ENCODE measurements at regions of chr7 and their contacts with region 1.

Region 1: DNA sequence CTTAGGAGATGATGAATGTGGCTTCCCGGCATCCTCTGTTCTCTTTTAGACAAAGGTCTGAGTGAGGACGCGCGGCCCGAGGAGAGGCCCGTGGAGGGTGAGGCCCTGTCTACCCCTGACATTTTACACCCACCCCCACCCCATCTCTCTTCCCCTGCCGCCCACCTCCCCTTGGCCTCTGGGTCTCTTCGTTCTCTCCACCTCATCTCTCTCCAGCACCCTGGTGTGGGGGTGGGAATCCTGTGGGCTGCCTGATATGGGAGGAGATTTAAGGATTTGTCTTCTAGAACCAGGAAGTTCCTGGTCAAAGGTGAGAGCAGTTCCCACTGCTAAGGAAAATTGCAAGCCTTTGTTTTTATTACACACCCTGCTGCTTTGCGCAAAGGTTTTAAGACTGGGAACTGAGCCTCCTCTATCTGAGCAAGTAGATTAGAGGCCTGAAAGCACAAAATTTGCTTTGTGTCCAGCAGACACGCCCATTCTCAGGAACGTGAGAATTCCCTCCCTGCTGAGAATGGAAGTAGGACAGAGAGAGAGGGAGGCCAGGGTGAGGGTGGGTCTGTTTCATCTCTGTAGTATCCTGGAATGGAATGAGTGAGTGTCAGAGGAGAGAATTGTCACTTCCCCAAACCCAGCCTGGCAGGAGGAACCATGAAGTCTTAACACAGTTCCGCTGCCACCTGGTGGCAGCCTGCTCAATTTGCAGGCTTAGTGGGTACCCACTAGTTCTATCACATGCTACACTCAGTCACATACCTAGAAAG is 91.2 kb downstream of the GTF2IRD1 start:
- DNase-seq: peak; percentile 83
- H3K4me3 Mint-ChIP-seq: no peak overlapping the region
- H3K27ac Mint-ChIP-seq: peak overlapping the region; percentile 63
- H3K4me1 Mint-ChIP-seq: peaks cover 7% of the 10 kb centered on the region
- H3K27me3 Mint-ChIP-seq: no peaks in the 10 kb centered on the region
- CTCF ChIP-seq: peak; percentile 64

Region 2: GRCh38 chr7:74417419-74417971 is 127.4 kb before region 1 on chr7:
- CTCF ChIA-PET with region 1: interaction called, 32 read pairs
- POLR2A ChIA-PET with region 1: interaction called, 3 read pairs
- intact Hi-C with region 1: loop called (anchors 1 kb)
- DNase-seq: peak; percentile 82
- H3K4me3 Mint-ChIP-seq: no peak overlapping the region
- H3K27ac Mint-ChIP-seq: no peak overlapping the region
- H3K4me1 Mint-ChIP-seq: peaks cover 6% of the 10 kb centered on the region
- H3K27me3 Mint-ChIP-seq: no peaks in the 10 kb centered on the region
- CTCF ChIP-seq: peak; percentile 96

Region 3: DNA sequence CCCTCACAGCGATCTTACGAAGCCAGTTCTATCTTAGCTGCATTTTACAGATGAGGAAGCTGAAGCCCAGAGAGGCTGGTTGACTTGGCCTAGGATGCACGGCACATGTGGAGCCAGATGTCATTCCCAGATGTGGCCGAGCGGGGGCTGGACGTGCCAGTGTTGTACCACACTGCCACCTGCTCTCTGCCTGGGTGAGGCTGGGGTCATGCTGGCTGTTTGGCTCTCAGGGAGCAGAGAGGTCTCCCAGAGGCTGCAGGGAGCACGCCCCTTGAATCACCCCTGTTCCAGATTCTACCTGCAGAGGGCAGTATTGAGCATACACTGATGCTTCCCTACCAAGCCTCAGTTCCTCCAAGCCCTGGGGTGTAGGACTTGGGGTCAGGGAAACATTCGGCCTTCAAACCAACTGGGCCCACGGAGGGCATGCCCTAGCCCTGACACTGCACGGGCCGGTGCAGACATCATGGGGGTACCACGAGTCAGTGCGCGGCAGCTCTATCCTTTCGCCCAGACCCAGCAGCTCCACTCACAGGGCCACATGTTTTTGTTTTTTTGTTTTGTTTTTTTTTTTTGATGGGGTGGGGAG is 95.0 kb before region 1 on chr7:
- CTCF ChIA-PET with region 1: interaction called, 4 read pairs
- POLR2A ChIA-PET with region 1: no interaction called
- intact Hi-C with region 1: loop called (anchors 10 kb)
- DNase-seq: peak; percentile 71
- H3K4me3 Mint-ChIP-seq: no peak overlapping the region
- H3K27ac Mint-ChIP-seq: no peak overlapping the region
- H3K4me1 Mint-ChIP-seq: peaks cover 7% of the 10 kb centered on the region
- H3K27me3 Mint-ChIP-seq: no peaks in the 10 kb centered on the region
- CTCF ChIP-seq: peak; percentile 83

Region 4: DNA sequence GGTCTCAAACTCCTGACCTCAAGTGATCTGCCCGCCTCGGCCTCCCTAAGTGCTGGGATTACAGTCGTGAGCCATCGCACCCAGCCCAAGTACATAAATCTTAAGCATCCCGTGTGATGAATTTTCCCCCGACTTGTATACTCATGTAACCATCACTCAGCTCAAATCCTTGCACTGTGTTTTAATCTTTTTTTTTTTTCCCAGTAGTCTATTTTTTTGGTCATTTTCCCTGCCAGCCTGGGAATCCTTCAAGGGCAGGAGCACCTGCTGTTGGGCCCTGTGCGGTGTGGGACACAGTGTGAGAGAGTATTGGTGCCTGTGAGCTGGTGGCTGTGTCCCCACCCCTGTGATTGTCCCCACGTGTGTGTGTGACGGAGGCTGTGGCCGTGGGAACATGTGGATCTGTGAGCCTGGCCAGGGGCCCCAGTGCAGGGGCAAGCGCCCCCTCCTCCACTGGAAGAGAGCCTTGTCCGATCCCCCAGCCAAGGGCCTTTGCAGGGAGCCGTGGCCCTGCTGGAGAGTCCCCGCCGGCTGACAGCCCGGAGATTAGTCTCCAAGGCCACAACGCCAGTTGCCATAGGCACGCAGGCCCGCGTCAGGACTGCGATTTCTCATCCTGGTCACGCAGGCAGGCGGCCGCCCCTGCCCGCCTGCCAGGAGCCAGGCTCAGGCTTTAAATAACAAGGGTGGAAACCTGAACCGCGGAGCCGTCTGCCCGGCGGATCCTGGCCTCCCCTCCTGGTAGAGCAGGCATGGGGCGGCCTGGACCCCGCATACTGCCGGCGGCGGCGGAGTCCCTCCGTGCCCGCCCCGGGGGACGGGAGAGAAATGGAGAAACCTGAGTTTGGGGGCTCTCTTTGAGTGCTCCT is 64.7 kb before region 1 on chr7:
- CTCF ChIA-PET with region 1: interaction called, 4 read pairs
- POLR2A ChIA-PET with region 1: interaction called, 15 read pairs
- intact Hi-C with region 1: loop called (anchors 5 kb)
- DNase-seq: peak; percentile 81
- H3K4me3 Mint-ChIP-seq: peak overlapping the region; percentile 72
- H3K27ac Mint-ChIP-seq: peak overlapping the region; percentile 98
- H3K4me1 Mint-ChIP-seq: peaks cover 56% of the 10 kb centered on the region
- H3K27me3 Mint-ChIP-seq: no peaks in the 10 kb centered on the region
- CTCF ChIP-seq: no peak

Region 5: GRCh38 chr7:74525880-74526279 is 19.0 kb before region 1 on chr7:
- CTCF ChIA-PET with region 1: interaction called, 4 read pairs
- POLR2A ChIA-PET with region 1: interaction called, 14 read pairs
- intact Hi-C with region 1: no loop called
- DNase-seq: peak; percentile 78
- H3K4me3 Mint-ChIP-seq: no peak overlapping the region
- H3K27ac Mint-ChIP-seq: peak overlapping the region; percentile 49
- H3K4me1 Mint-ChIP-seq: peaks cover 9% of the 10 kb centered on the region
- H3K27me3 Mint-ChIP-seq: no peaks in the 10 kb centered on the region
- CTCF ChIP-seq: no peak

Region 6: DNA sequence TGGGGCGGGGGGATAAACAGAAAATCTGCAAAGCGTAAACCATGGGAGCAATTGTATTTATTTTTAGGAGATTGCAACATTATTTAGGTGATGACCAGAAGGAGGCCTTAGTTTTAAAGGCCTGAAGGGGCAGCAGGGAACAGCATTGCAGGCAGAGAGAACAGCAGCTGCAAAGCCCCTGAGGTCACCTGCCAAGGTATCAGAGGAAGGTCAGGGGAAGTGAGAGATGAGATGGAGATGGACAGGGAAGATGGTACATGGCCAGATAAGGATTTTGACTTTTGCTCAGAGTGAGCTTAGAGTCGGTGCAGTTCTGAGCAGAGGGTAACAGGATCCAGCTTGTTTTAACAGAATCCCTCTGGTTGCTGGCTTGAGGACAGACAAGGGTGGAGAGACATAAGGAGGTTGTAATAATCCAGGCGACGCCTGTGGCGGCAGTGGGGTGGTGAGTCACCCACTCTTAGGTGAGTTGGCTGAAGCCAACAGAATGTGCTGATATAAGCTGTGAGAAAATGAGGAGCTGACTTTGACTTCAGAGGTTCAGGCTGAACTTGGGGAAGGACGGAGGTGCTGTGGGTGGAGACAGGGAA is 30.3 kb after region 1 on chr7:
- CTCF ChIA-PET with region 1: interaction called, 4 read pairs
- POLR2A ChIA-PET with region 1: interaction called, 10 read pairs
- intact Hi-C with region 1: no loop called
- DNase-seq: peak; percentile 94
- H3K4me3 Mint-ChIP-seq: peak overlapping the region; percentile 4
- H3K27ac Mint-ChIP-seq: peak overlapping the region; percentile 57
- H3K4me1 Mint-ChIP-seq: peaks cover 13% of the 10 kb centered on the region
- H3K27me3 Mint-ChIP-seq: no peaks in the 10 kb centered on the region
- CTCF ChIP-seq: no peak

Measured in MCF 10A (cell line).